PC-9 (cell line): ENCODE measurements at regions of chr3 and their contacts with region 1.

Region 1: GRCh38 chr3:197002701-197003454 is 26.7 kb downstream of the MELTF start:
- DNase-seq: peak in 1 of 2 experiments; percentile 68
- H3K4me3 ChIP-seq: no peak overlapping the region
- H3K27ac ChIP-seq: no peak overlapping the region
- H3K4me1 ChIP-seq: no peaks in the 10 kb centered on the region
- H3K27me3 ChIP-seq: no peaks in the 10 kb centered on the region
- CTCF ChIP-seq: no peak

Region 2: DNA sequence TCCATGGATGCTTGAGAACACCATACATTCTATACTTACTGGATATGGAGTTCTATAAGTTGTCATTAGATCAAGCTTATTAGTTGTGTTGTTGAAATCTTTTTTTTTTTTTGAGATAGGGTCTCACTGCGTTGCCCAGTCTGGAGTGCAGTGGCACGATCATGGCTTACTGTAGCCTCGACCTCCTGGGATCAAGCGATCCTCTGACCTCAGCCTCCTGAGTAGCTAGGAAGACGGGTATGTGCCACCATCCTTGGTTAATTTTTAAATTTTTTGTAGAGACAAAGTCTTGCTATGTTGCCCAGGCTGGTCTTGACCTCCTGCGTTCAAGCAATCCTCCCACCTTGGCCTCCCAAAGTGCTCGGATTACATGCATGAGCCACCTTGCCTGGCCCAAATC is 48.0 kb before region 1 on chr3:
- CTCF ChIA-PET with region 1: no interaction called
- POLR2A ChIA-PET with region 1: interaction called, 11 read pairs
- intact Hi-C with region 1: no loop called
- DNase-seq: no peak
- H3K4me3 ChIP-seq: no peak overlapping the region
- H3K27ac ChIP-seq: no peak overlapping the region
- H3K4me1 ChIP-seq: no peaks in the 10 kb centered on the region
- H3K27me3 ChIP-seq: no peaks in the 10 kb centered on the region
- CTCF ChIP-seq: no peak

Region 3: DNA sequence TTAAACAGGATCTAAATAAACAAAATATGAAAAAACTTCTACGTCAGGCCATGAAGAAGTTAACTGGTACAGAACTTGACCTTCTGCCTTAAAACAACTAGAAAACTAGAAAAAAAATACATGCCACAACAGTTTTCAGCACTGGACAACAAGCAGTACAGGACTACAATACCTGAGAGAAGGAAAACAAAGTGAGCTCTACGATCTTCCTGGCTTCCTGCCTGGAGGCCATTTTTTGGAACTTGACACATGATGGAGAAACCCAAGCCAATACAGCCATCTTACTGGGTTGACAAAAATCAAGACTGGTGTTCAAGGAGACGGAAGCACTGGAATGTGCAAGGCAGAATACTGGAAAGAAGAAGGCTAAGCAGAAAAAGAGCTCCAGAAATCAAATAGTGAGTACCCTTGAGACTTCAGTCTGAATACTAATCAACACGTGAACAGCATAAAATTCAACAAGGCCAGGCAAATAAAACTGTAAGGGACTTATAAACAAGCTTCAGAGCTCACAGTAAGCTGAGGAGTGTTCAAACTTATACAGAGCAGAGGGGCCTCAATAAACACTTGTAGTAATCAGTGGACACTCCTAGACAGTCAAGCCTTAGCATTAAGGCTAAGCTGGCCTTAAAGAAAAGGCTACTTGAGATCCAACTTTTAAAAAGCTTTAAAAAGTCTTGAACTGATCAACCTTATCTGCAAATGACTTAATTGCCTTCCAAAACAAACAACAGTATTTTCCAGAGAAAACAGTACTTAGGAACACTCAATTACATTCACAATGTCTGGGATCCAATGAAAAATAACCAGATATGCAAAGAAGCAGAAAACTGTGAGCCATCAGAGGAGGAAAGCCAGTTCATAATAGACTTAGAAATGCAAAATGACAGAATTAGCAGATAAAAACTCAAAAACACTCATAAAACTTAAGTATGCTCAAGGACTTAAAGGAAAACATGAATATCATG is 232.4 kb after region 1 on chr3:
- CTCF ChIA-PET with region 1: no interaction called
- POLR2A ChIA-PET with region 1: no interaction called
- intact Hi-C with region 1: no loop called
- DNase-seq: no peak
- H3K4me3 ChIP-seq: no peak overlapping the region
- H3K27ac ChIP-seq: no peak overlapping the region
- H3K4me1 ChIP-seq: no peaks in the 10 kb centered on the region
- H3K27me3 ChIP-seq: no peaks in the 10 kb centered on the region
- CTCF ChIP-seq: no peak

Region 4: GRCh38 chr3:197590313-197590962 is 587.6 kb after region 1 on chr3:
- CTCF ChIA-PET with region 1: no interaction called
- POLR2A ChIA-PET with region 1: interaction called, 10 read pairs
- intact Hi-C with region 1: no loop called
- DNase-seq: peak; percentile 51 to 73
- H3K4me3 ChIP-seq: no peak overlapping the region
- H3K27ac ChIP-seq: peak overlapping the region; percentile 25
- H3K4me1 ChIP-seq: peaks cover 11% of the 10 kb centered on the region
- H3K27me3 ChIP-seq: no peaks in the 10 kb centered on the region
- CTCF ChIP-seq: no peak